ENCODE measurements at regions of chr20 and their contacts with region 1.

Region 1: DNA sequence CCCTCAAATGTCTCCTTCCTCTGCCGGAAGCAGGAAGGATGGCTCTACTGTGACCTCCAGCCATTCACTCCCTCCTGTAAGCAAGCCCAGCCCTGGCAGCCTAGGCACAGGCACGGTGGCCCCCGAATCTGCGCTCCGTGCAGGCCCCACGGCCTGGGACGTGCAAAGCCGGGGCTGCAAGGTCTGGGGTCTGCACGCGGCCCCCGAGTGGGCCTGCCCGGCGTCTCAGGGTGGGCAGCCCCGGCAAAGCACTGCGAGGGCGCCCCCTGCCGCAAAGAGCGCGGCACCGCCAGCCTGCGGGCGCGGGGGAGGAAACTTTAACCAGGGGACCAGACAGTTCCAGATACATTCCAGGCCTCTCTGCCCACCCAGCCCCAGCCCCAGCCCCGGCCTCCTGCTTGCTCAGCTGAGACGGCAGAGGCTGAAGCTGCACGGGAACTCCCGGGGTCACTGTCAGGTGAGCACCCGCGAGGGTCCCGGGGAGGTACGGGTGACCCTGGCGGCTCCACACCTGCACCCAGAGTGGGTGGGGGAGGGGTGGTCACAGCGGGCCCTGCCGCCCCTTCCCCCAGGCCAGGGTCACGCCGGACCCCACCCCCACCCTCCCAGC is 98.8 kb downstream of the ASXL1 start:
- DNase-seq: peak; percentile 70 to 90
- ATAC-seq: peak; percentile 70 to 83
- H3K4me3 ChIP-seq: peak overlapping the region; percentile 81
- H3K27ac ChIP-seq: peak overlapping the region; percentile 96 to 97
- H3K4me1 ChIP-seq: peaks cover 17% of the 10 kb centered on the region
- CTCF ChIP-seq: peak; percentile 96
- EP300 ChIP-seq: no peak
- POLR2A ChIP-seq: no peak
- RAD21 ChIP-seq: peak; percentile 66 to 87

Region 2: GRCh38 chr20:32418376-32418775 is 38.6 kb before region 1 on chr20:
- CTCF ChIA-PET with region 1: no interaction called
- POLR2A ChIA-PET with region 1: no interaction called
- DNase-seq: no peak
- ATAC-seq: no peak
- H3K4me3 ChIP-seq: no peak overlapping the region
- H3K27ac ChIP-seq: no peak overlapping the region
- H3K4me1 ChIP-seq: peaks cover 16% of the 10 kb centered on the region; the same call in 2 of the 3 replicates
- CTCF ChIP-seq: no peak
- EP300 ChIP-seq: no peak
- POLR2A ChIP-seq: no peak
- RAD21 ChIP-seq: no peak

Region 3: DNA sequence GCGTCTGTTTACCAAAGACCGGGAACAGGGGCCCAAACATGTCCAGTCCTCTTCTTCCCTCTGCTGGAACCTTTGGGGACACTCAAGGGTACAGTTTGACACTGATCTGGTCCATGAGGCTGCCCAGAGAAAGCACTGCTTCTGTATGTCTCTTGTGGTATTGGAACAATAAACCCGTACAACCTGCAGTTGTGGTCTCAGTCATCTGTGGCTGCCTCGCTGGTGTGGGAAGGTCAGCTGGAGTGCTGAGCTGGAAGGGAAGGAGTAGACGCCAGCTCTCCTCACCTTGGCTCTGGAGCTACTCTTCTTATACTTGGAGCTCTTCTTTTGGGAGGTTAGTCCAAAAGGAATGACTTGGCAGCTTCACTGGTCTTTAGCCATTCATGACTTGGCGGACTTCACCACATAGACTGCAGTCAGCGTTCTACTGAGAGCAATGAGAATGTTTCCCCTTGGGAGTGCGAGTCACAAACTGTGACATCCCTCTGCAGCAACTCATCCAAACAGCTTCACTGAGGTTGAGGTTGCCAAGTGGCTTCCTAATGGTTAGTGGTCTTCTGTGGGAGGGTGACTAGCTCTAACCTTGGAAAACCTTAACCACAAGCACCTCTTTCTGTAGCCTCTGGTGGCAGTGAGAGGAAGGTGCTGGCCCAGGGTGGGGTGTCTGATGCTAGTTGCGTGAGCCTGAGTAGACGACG is 17.7 kb before region 1 on chr20:
- CTCF ChIA-PET with region 1: interaction called, 82 read pairs
- POLR2A ChIA-PET with region 1: no interaction called
- DNase-seq: no peak
- ATAC-seq: no peak
- H3K4me3 ChIP-seq: no peak overlapping the region
- H3K27ac ChIP-seq: no peak overlapping the region
- H3K4me1 ChIP-seq: peaks cover 5% of the 10 kb centered on the region; the same call in 1 of the 3 replicates
- CTCF ChIP-seq: no peak
- EP300 ChIP-seq: no peak
- POLR2A ChIP-seq: no peak
- RAD21 ChIP-seq: no peak